ENCODE measurements at regions of chr15 and their contacts with region 1.

Region 1: DNA sequence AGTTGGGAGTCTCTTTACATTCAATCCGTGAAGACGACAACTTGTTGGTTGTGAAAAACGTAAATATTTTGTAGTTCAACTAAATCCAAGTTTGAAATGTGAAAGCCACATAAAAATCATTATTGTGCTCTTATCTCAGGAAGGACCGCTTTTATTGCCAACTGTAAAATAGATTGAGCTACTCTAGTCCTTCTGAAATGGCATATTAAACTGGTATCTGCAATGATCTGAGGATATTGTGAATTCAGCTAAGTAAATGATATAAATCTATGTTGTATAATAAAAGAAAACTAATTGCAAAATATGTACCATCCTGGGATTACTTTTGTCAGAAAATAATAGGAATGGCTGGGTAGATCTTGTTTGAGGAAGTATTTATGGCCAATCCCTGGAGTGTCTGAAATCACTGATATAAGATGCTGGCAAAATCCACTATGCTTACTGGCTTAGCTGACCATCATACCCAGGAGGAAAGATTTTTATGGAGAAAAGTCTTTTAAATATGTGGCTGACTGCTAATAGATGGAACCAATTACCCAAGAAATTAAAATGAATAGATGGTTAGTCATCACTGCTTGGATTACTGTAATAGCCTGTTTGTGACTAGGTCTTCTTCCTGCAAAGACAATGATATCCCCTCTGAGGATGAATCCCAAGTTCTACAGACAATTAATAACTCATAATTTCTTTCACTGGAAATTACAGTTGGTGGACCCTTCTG is 191.8 kb downstream of the SEMA6D start:
- DNase-seq: no peak
- ATAC-seq: no peak
- H3K4me3 Mint-ChIP-seq: no peak overlapping the region
- H3K27ac Mint-ChIP-seq: no peak overlapping the region
- H3K4me1 Mint-ChIP-seq: no peaks in the 10 kb centered on the region
- H3K27me3 Mint-ChIP-seq: peaks cover 3% of the 10 kb centered on the region
- CTCF ChIP-seq: no peak

Region 2: DNA sequence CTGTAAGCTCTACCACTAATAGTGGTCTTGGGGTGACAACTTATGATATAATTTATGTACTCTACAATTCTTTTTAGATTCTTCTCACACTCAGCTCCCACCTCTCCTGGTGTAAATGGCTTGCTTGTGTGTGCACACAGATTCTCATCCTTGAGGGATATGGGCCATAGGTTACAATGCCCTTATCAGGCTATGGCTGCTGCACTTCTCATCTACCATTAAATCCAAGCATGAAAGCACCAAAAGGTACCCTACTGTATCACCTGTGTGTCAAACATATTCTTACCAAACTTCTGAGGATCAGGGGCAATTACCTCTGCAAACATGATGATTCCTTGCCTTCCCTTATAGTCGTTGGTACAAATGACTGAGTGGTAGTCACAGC is 1382.4 kb before region 1 on chr15:
- CTCF ChIA-PET with region 1: no interaction called
- POLR2A ChIA-PET with region 1: no interaction called
- intact Hi-C with region 1: no loop called
- DNase-seq: no peak
- ATAC-seq: no peak
- H3K4me3 Mint-ChIP-seq: no peak overlapping the region
- H3K27ac Mint-ChIP-seq: no peak overlapping the region
- H3K4me1 Mint-ChIP-seq: no peaks in the 10 kb centered on the region
- H3K27me3 Mint-ChIP-seq: no peaks in the 10 kb centered on the region
- CTCF ChIP-seq: no peak

Region 3: DNA sequence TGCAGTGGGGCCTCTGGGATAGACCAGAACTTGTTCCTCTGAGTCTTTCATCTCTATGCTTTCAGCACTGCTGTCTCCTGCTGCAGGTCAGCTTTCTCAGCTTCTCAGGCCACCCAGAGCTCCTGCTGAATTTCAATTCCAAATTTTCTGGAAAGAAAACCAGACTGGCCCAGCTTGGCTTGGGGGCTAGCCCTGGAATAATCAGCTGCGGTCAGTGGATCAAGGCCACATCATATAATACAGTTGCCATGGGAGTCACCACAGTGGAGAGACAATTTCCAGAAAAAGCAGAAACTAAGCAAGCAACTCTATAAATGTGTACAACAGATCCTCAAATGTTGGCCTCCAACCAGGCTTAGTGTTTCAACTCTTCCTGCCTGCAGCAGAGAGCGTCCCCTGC is 120.5 kb after region 1 on chr15:
- CTCF ChIA-PET with region 1: no interaction called
- POLR2A ChIA-PET with region 1: no interaction called
- intact Hi-C with region 1: no loop called
- DNase-seq: no peak
- ATAC-seq: no peak
- H3K4me3 Mint-ChIP-seq: no peak overlapping the region
- H3K27ac Mint-ChIP-seq: no peak overlapping the region
- H3K4me1 Mint-ChIP-seq: no peaks in the 10 kb centered on the region
- H3K27me3 Mint-ChIP-seq: peaks cover 4% of the 10 kb centered on the region
- CTCF ChIP-seq: no peak

Region 4: DNA sequence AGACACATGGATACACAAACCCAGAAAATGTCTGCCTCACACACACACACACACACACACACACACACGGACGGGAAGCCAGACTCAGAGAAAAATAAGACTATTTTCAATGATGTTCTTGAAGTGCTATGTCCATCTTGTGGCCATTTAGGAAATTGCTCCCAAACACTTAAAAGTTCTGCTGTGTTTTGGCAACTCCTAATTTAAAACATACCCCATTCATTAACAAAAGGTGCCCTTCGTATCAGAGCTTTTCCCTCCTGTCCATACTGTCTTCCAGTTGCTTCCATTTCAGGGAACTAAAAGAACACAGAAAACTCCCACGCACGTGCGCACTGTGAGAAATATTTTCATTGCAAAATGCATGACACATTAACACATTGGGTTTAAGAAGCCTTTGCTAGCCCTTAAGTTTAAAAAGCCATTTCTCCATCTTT is 341.5 kb after region 1 on chr15:
- CTCF ChIA-PET with region 1: no interaction called
- POLR2A ChIA-PET with region 1: no interaction called
- intact Hi-C with region 1: loop called (anchors 5 kb)
- DNase-seq: no peak
- ATAC-seq: no peak
- H3K4me3 Mint-ChIP-seq: no peak overlapping the region
- H3K27ac Mint-ChIP-seq: no peak overlapping the region
- H3K4me1 Mint-ChIP-seq: no peaks in the 10 kb centered on the region
- H3K27me3 Mint-ChIP-seq: peaks cover 9% of the 10 kb centered on the region
- CTCF ChIP-seq: no peak